Dorsolateral prefrontal cortex (tissue), 120 donors: ENCODE measurements at regions of chr1 and their contacts with region 1.

Region 1: DNA sequence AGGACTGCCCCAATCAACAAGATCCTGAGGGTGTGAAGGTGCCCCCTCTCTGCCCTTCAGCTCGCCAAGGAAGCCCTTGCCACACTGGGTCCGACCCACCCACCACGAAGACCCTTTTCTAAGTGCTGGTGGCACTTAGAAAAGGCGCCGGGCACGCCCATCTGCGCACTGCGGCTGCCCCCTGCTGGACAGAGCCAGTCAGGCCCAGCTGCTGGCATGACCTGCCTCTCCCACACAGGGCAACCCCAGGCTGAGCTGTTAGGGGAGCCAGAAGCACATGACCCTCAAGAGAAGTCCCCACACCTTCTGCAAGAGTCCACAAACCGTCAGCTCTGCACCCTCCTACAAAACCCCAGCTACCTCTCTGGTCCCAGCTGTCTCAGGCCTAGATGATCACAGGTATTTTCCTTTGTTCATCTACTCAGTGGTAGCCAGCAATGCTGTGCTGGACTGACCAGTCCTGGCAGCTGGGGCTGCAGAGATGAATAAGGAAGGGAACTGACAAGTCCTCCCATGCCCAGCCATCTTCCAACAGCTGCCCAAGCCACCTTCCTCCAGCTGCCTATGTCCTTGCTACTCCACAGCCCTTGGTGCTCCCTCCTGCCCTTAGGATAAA is 40.0 kb upstream of the ZC3H12A start:
- DNase-seq: peak; percentile 61 to 86 (median 77)
- H3K4me3 ChIP-seq: no peak overlapping the region
- H3K27ac ChIP-seq: no peak overlapping the region
- H3K27me3 ChIP-seq: peaks cover 0 to 11% (median 0%) of the 10 kb centered on the region in 45 donors
- CTCF ChIP-seq: peak; percentile 85 to 99 (median 96)

Region 2: DNA sequence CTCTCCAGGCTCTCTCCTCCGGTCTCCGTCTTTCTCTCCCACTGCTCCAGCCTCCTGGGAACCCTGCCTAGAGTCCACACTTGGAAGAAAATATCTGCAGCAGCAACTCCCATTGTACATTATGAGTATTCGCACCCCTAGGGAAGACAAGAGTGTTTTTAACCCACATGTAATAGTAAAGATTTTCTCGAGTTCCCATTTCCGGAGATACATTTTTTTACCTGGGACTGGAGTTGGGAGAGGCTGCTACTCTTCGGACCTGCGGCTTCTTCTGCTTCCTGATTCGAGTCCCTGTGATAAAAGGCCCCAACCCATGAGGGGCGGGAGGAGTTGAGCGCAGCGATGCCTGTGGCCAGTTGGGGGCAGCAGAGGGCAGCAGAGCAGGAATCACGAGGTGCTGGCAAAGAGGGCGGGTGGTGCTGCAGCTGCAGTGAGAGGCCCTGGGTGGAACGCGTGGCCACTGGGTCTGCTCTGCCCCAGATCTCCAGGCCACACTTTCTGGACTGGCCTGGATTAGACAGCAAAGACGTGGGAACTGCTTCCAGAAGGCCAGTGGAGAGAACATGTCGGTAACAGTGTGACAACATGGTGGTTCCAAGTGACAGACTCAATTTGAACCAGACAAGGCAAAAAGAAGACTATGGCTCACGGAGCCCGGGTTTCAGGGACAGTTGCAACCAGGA is 730.7 kb before region 1 on chr1:
- intact Hi-C with region 1: loop called (anchors 2 to 5 kb)
- DNase-seq: peak; percentile 59 to 89 (median 84)
- H3K4me3 ChIP-seq: no peak overlapping the region
- H3K27ac ChIP-seq: peak overlapping the region in 53 of 59 donors; percentile 2 to 84 (median 66)
- H3K27me3 ChIP-seq: peaks cover 0 to 10% (median 0%) of the 10 kb centered on the region in 45 donors
- CTCF ChIP-seq: peak; percentile 74 to 99 (median 95)

Region 3: DNA sequence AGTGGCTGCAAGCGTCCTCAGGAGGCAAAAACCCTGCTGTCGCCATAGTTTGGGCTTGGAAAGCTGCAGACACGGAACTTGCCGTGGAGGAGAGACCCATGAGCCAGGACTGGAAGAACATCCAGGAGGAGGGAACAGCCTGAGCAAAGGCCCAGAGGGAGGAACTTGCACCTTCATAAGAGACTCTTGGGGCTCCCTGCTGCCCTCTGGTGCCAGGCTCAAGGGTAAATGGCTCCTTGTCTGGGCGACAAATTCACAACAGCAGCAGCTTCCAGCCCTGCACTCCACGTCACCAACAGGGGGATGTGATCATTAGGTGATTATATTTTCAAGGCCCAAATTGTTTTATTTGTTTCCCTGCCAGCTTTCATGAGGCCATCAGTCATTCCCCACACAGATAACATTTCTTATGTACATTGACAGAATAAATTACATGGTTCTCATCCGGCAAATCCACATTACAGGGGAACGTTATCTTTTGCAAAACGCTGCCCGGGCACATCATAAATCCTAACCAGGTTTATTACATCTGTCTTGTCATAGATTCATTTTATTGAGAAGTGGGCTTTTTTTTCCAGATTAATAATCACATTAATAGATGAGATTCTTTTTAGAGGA is 257.0 kb before region 1 on chr1:
- intact Hi-C with region 1: loop called in 1 of 2 experiments (anchors 10 kb)
- DNase-seq: peak in 7 of 10 donors; percentile 38 to 67 (median 57)
- H3K4me3 ChIP-seq: no peak overlapping the region
- H3K27ac ChIP-seq: no peak overlapping the region
- H3K27me3 ChIP-seq: peaks cover 0 to 8% (median 0%) of the 10 kb centered on the region in 45 donors
- CTCF ChIP-seq: peak in 49 of 56 donors; percentile 18 to 61 (median 43)

Region 4: GRCh38 chr1:37255136-37255795 is 179.1 kb before region 1 on chr1:
- intact Hi-C with region 1: loop called in 1 of 2 experiments (anchors 10 kb)
- DNase-seq: peak in 8 of 10 donors; percentile 52 to 67 (median 58)
- H3K4me3 ChIP-seq: peak overlapping the region in 12 of 59 donors; percentile 5 to 33 (median 18)
- H3K27ac ChIP-seq: no peak overlapping the region
- H3K27me3 ChIP-seq: peaks cover 0 to 28% (median 7%) of the 10 kb centered on the region in 45 donors
- CTCF ChIP-seq: peak in 19 of 56 donors; percentile 11 to 52 (median 26)

Region 5: GRCh38 chr1:37676281-37677243 is 242.2 kb after region 1 on chr1:
- intact Hi-C with region 1: no loop called
- DNase-seq: no peak
- H3K4me3 ChIP-seq: no peak overlapping the region
- H3K27ac ChIP-seq: peak overlapping the region in 42 of 59 donors; percentile 1 to 78 (median 48)
- H3K27me3 ChIP-seq: peaks cover 0 to 11% (median 0%) of the 10 kb centered on the region in 45 donors
- CTCF ChIP-seq: peak in 1 of 56 donors; percentile 7

Region 6: GRCh38 chr1:37752583-37753471 is 318.4 kb after region 1 on chr1:
- intact Hi-C with region 1: no loop called
- DNase-seq: peak in 2 of 10 donors; percentile 20 to 52
- H3K4me3 ChIP-seq: peak overlapping the region; percentile 10 to 66 (median 50)
- H3K27ac ChIP-seq: peak overlapping the region in 15 of 59 donors; percentile 2 to 65 (median 39)
- H3K27me3 ChIP-seq: peaks cover 0 to 21% (median 5%) of the 10 kb centered on the region in 45 donors
- CTCF ChIP-seq: peak in 4 of 56 donors; percentile 10 to 21 (median 14)